ENCODE measurements at regions of chr17 and their contacts with region 1.

Region 1: DNA sequence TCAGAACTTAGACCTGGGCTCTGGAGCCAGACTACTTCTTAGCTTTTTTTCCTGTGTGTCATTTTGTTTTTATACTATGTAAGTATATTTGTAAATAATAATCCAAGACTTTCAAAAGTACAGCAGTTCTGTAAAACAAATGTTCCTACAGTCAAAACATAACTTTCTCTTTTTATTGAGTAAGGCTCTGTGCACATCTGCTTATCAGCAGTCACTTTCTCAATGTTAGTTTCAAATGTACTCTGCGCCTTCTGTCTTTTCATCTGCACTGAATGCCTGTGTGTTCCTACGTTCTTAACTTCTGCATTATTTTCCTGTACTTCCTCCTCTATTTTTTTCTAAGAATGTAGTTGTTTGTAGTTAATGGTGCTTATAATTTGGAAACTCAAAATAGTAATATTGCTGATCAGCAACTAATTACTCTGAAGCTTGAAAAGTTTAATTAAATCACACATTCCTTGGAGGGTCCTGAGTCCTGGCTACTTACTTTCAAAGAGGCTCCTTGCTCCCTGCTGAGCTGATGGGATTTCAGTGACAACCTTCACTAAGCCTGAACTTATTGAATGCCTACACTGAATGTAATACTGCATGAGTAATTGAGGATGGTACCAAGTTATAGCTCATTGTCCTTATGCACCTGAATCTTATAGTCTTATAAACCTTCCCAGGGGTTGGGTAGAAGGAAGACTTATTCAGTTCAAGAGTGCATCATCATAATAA is 329.9 kb downstream of the KCNJ2 start:
- DNase-seq: no peak
- H3K4me3 Mint-ChIP-seq: no peak overlapping the region
- H3K27ac Mint-ChIP-seq: no peak overlapping the region
- H3K4me1 Mint-ChIP-seq: no peaks in the 10 kb centered on the region
- H3K27me3 Mint-ChIP-seq: no peaks in the 10 kb centered on the region

Region 2: DNA sequence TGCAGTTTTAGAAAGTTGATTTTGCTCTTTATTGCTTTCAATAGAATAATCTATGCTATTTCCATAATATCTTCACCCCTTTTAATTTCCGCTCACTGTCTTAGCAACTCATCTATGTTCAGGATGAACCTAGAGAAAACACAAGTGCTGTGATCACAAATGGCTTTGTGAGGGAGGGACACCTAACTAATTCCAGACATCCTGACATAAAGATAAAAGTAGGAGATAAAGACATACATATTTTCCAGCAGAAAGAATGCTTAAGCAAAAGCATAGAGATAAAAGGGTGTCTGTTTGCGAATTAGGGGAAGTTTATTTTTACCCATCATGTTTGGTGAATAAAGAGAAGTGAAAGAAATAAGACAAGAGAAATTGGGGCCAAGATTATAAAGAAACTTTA is 75.7 kb before region 1 on chr17:
- intact Hi-C with region 1: loop called (anchors 2 kb)
- DNase-seq: no peak
- H3K4me3 Mint-ChIP-seq: no peak overlapping the region
- H3K27ac Mint-ChIP-seq: no peak overlapping the region
- H3K4me1 Mint-ChIP-seq: no peaks in the 10 kb centered on the region
- H3K27me3 Mint-ChIP-seq: no peaks in the 10 kb centered on the region

Region 3: DNA sequence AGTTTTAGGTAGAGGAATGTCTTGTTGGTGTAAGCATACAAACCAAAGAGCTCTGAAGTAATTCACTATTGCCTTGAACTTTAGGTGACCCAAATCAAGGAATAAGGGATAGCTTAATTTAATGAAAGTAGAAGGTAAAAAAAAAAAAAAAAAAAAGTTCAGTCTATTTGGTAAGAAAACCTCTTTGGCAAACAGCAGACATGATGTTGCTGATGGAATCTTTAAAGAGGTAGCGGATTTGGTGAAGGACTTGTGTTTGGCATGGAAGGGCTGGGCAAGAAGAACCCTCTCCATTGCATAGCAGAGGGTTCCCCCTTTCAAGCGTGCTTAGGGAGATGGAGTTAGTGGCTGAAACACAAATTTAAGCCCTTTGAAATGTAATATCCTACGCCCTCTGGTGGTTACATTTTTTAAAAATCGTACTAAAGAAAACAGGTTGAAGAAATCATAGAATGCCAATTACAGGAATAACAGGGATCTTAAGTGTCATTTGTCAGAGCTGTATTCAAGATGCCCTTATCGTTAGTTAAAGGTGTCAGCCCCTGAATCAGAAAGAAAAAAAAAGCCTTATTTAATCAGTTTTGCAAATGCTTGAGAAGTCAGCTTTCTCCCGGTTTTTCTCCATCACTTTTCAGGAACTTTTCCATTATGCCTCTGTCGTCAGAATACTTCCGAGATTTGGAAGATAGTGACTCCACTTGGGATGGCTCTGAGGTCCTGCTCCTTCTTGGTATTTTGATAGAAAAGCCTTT is 53.2 kb after region 1 on chr17:
- intact Hi-C with region 1: no loop called
- DNase-seq: no peak
- H3K4me3 Mint-ChIP-seq: no peak overlapping the region
- H3K27ac Mint-ChIP-seq: no peak overlapping the region
- H3K4me1 Mint-ChIP-seq: no peaks in the 10 kb centered on the region
- H3K27me3 Mint-ChIP-seq: no peaks in the 10 kb centered on the region